ENCODE measurements at regions of chr14 and their contacts with region 1.

Region 1: DNA sequence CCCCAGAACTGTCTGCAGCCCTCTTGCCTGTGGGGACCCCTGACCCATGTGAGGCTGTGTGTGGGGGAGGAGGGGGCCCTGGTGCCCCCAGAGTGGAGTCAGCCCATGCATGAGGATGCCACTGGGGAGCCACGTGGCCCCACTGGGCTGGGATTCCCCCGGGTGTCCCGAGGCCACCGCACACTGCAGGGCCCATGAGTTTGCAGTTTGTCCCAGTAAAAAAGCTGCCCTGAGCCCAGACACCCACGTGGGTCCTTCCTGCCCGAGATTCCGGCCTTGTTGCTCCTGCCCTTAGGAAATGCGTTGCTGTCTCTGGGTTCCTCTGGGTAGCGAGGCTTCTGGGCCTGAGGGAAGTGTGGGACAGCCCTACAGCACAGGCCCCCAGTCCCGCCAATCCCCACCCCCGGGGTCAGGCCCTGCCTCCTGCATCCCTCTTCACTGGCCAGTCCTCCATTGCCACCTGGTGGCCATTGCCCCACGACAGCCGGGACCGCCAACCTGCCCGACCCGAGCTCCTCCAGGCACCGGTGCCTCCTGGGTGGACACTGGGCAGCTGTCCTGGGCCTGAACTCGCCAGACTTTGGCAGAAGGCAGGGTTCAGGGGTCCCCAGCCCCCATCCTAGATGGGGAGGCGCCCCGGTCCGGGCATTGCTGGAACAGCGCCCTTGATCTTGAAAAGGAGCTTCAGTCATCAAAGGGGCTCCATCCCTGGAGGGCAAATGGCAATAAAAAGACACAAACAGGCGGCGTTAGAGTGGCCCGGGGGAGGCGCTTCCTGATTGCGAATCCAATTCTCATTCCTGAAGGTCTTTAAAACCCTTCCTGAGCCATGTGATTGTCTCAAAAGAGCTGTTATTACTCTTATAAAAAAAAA is 15.6 kb upstream of the C14orf180 start:
- DNase-seq: peak; percentile 80
- H3K4me3 Mint-ChIP-seq: no peak overlapping the region
- H3K27ac Mint-ChIP-seq: no peak overlapping the region
- H3K4me1 Mint-ChIP-seq: peaks cover 3% of the 10 kb centered on the region
- H3K27me3 Mint-ChIP-seq: peaks cover 14% of the 10 kb centered on the region

Region 2: DNA sequence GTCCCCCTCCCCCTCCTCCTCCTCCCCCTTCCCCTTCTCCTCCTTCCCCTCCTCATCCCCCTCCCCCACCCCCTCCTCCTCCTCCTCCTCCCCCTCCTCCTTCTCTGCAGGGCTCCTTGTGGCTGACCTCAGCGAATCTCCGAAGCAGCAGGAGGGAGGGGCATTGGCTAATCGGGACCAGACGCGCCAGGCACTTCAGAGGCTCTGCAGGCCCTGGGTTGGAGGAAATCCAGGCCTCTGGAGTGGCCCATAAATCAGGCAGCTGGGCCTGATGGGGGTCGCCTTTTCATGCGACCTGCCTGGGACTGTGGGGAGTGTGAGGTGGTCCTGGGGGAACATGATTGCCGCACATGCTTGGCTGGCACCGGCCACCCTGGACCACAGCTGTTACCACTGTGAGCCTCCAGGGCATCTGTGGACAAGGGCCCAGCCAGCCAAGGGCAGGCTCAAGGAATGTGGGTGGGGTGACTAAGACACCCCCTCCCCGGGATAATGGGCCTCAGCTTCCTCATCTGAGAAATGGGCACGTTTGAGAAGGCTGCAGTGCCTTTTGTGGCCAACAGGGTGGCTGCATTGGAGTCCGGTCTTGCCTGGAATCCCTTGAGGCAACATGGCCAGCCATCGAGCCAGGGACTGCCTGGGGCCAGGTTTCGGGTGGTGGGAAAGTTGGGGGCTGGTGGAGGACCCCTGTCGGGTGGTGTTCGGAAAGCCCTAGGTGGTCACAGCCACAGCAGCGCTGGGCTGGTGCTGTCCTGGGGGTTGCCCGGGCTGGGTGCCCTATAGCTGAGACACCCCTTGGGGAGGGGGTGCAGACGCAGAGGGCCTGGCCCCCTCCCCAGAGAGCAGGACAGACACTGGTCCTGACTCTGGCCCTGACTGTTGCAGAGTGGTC is 413.6 kb before region 1 on chr14:
- CTCF ChIA-PET with region 1: no interaction called
- intact Hi-C with region 1: loop called (anchors 5 kb)
- DNase-seq: no peak
- H3K4me3 Mint-ChIP-seq: no peak overlapping the region
- H3K27ac Mint-ChIP-seq: no peak overlapping the region
- H3K4me1 Mint-ChIP-seq: no peaks in the 10 kb centered on the region
- H3K27me3 Mint-ChIP-seq: no peaks in the 10 kb centered on the region

Region 3: DNA sequence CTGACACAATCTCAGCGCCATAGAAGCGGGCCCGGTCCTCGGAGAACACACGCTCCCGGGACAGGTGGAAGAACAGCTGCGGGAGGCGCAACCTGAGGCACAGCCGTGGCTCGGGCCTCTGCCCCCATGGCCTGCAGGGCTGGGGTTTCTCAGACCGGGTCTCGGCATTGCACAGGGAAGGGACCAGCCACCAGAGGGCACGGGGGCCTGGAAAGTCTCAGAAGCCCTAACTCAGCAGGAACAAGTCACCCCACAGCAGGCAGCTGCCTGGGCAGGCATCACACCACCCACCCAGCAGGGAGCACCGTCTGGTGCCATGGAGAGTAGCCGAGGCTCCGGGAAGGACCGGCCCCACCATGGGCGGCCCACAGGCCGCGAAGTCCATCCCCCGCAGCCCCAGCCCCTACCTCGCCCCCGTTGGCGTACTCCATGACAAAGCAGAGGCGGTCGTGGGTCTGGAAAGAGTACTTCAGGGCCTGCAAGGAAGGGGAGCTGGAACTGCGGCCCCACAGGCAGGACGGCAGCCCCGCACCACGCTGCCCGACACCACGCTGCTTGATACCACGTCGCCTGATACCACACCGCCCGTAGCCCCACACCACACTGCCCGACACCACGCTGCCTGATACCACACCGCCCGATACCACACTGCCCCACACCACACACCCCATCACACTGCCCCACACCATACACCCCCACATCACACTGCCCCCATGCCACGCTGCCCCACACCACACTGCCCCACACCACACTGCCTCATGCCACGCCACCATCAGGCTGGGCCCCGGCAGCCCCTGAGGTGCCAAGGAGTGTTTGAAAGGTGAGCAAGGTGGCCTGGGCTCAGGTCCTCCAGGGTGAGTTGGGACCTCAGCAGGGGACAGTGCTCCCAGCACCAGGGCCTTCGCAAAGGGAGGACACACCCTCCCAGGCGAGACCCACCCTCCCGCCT is 209.8 kb after region 1 on chr14:
- CTCF ChIA-PET with region 1: no interaction called
- intact Hi-C with region 1: no loop called
- DNase-seq: no peak
- H3K4me3 Mint-ChIP-seq: no peak overlapping the region
- H3K27ac Mint-ChIP-seq: no peak overlapping the region
- H3K4me1 Mint-ChIP-seq: peaks cover 6% of the 10 kb centered on the region
- H3K27me3 Mint-ChIP-seq: no peaks in the 10 kb centered on the region